ENCODE measurements at regions of chr11 and their contacts with region 1.

Region 1: GRCh38 chr11:123822591-123822990 is 16.4 kb upstream of the OR6M1 start:
- DNase-seq: peak in 1 of 2 experiments; percentile 69
- H3K4me3 ChIP-seq: no peak overlapping the region
- H3K27ac ChIP-seq: no peak overlapping the region
- H3K4me1 ChIP-seq: no peaks in the 10 kb centered on the region
- H3K27me3 ChIP-seq: no peaks in the 10 kb centered on the region; the same call in 1 of the 2 replicates
- CTCF ChIP-seq: no peak

Region 2: DNA sequence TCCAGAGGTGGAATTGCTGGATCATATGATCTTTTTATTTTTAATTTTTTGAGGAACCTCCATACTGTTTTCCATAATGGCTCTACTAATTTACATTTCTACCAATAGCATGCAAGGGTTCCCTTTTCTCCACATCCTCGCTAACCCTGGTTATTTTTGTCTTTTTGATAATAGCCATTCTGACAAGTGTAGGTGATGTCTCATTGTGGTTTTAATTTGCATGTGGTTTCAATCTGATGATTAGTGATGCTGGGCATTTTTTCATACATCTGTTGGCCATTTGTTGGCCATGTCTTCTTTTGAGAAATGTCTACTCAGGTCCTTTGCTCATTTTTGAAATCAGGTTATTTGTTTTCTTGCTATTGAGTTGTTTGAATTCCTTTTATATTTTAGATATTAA is 101.4 kb after region 1 on chr11:
- CTCF ChIA-PET with region 1: interaction called, 14 read pairs
- POLR2A ChIA-PET with region 1: no interaction called
- intact Hi-C with region 1: no loop called
- DNase-seq: no peak
- H3K4me3 ChIP-seq: no peak overlapping the region
- H3K27ac ChIP-seq: no peak overlapping the region
- H3K4me1 ChIP-seq: no peaks in the 10 kb centered on the region
- H3K27me3 ChIP-seq: peaks cover 7% of the 10 kb centered on the region; the same call in 1 of the 2 replicates
- CTCF ChIP-seq: no peak

Measured in PC-9 (cell line).